Activated T-helper 1 cell treated with anti-CD3 and anti-CD28 coated beads, Interleukin-12 subunit alpha, Interleukin-12 subunit beta, Interleukin-2, Interleukin-4 antibody, amounts not matched to agents 30 ng/mL and 10 ng/mL and 1 ng/mL, durations not matched to agents 14 hours and 24 hours and 36 hours (primary cell): ENCODE measurements at regions of chr7 and their contacts with region 1.

Region 1: GRCh38 chr7:46352004-46352954 is 431.2 kb upstream of the IGFBP3 start:
- DNase-seq: no peak
- H3K4me3 Mint-ChIP-seq: no peak overlapping the region
- H3K27ac Mint-ChIP-seq: no peak overlapping the region
- H3K4me1 Mint-ChIP-seq: no peaks in the 10 kb centered on the region
- H3K27me3 Mint-ChIP-seq: no peaks in the 10 kb centered on the region

Region 2: GRCh38 chr7:45923290-45923689 is 429.0 kb before region 1 on chr7:
- intact Hi-C with region 1: loop called (anchors 2 kb)
- DNase-seq: peak; percentile 17
- H3K4me3 Mint-ChIP-seq: peak overlapping the region; percentile 34
- H3K27ac Mint-ChIP-seq: no peak overlapping the region
- H3K4me1 Mint-ChIP-seq: peaks cover 20% of the 10 kb centered on the region
- H3K27me3 Mint-ChIP-seq: peaks cover 49% of the 10 kb centered on the region

Region 3: DNA sequence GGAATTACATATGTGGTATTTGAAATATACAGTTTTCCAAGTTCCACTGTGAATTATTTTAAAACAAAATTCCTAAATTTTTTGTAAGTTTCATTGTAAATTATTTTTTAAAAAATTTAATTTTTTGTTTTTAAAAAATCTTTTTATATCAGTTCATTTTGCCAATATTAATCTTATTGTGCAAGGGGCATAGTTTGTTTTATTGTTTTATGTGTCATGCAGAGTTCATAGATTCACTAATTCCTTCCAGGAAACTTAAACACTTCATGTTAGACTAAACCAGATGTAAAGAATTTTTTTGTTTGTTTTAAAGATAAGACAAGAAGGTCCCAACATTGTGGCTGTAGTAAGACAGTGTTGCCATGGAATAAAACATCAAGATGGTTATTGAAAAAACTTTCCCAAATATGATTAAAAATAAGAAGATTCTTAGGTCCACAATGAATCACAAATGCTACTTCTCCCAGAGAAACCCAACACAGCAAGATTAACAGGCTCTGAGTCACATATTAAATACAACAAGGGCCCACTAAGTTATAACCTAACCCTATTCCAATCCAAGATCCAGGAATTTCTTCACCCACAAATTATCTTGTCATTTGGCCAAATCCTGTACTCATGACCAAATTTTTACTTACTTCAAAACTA is 33.5 kb after region 1 on chr7:
- intact Hi-C with region 1: no loop called
- DNase-seq: no peak
- H3K4me3 Mint-ChIP-seq: no peak overlapping the region
- H3K27ac Mint-ChIP-seq: no peak overlapping the region
- H3K4me1 Mint-ChIP-seq: no peaks in the 10 kb centered on the region
- H3K27me3 Mint-ChIP-seq: no peaks in the 10 kb centered on the region

Region 4: GRCh38 chr7:46515844-46516590 is 163.7 kb after region 1 on chr7:
- intact Hi-C with region 1: no loop called
- DNase-seq: no peak
- H3K4me3 Mint-ChIP-seq: no peak overlapping the region
- H3K27ac Mint-ChIP-seq: no peak overlapping the region
- H3K4me1 Mint-ChIP-seq: no peaks in the 10 kb centered on the region
- H3K27me3 Mint-ChIP-seq: no peaks in the 10 kb centered on the region